ENCODE measurements at regions of chr16 and their contacts with region 1.

Region 1: GRCh38 chr16:22924492-22924891 is 110.5 kb downstream of the HS3ST2 start:
- DNase-seq: no peak
- H3K4me3 ChIP-seq: no peak overlapping the region
- H3K27ac ChIP-seq: no peak overlapping the region
- H3K4me1 ChIP-seq: no peaks in the 10 kb centered on the region
- H3K27me3 ChIP-seq: peaks cover 96% of the 10 kb centered on the region
- CTCF ChIP-seq: no peak

Region 2: DNA sequence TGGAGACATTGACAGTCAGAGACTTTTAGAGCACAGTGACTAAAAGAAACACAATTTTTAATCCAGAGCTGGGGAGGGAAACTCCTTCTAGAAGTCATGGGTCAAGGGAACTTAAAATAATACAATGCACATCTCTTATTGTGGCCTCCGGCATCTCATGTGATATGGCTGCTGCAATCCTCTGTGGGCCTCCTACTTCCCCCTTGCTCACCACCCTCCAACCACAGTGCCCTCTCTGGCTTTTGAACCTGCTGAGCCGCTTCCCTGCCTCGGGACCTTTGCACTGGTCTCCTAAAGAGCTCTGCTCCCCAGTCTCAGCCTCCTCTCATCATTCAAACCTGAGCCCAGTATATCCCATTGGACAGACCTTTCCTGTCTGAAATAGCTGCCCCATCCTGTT is 62.9 kb before region 1 on chr16:
- CTCF ChIA-PET with region 1: no interaction called
- POLR2A ChIA-PET with region 1: no interaction called
- intact Hi-C with region 1: no loop called
- DNase-seq: no peak
- H3K4me3 ChIP-seq: no peak overlapping the region
- H3K27ac ChIP-seq: no peak overlapping the region
- H3K4me1 ChIP-seq: no peaks in the 10 kb centered on the region
- H3K27me3 ChIP-seq: no peaks in the 10 kb centered on the region; the same call in 1 of the 2 replicates
- CTCF ChIP-seq: no peak

Region 3: GRCh38 chr16:23048159-23048558 is 123.7 kb after region 1 on chr16:
- CTCF ChIA-PET with region 1: interaction called, 11 read pairs
- POLR2A ChIA-PET with region 1: no interaction called
- intact Hi-C with region 1: no loop called
- DNase-seq: no peak
- H3K4me3 ChIP-seq: no peak overlapping the region
- H3K27ac ChIP-seq: no peak overlapping the region
- H3K4me1 ChIP-seq: no peaks in the 10 kb centered on the region
- H3K27me3 ChIP-seq: peaks cover 75% of the 10 kb centered on the region
- CTCF ChIP-seq: no peak; the same call in 1 of the 2 replicates

Measured in PC-9 (cell line).